ENCODE measurements at regions of chr7 and their contacts with region 1.

Region 1: DNA sequence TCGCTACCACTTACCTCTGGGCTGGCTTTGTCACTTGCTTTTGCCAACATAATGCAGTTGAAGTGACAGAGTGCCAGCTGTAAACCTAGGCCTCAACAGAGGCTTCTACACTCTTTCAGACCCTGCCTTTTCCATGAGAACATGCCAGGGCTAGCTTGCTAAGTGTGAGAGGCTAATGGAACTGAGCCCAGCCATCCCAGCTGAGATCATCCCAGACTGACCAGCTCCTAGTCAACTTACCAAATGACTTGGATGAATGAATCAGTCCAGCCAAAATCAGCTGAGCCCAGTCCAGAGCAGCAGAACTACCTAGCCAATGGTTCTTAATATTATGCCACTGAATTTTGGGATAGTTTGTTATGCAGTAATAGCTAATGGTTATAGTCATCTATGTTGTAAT is 34.7 kb upstream of the MKLN1 start:
- DNase-seq: peak; percentile 10
- H3K4me3 Mint-ChIP-seq: no peak overlapping the region
- H3K27ac Mint-ChIP-seq: no peak overlapping the region
- H3K4me1 Mint-ChIP-seq: peaks cover 16% of the 10 kb centered on the region
- H3K27me3 Mint-ChIP-seq: no peaks in the 10 kb centered on the region
- CTCF ChIP-seq: no peak

Region 2: GRCh38 chr7:130699686-130700085 is 593.3 kb before region 1 on chr7:
- CTCF ChIA-PET with region 1: no interaction called
- POLR2A ChIA-PET with region 1: no interaction called
- intact Hi-C with region 1: no loop called
- DNase-seq: peak; percentile 27
- H3K4me3 Mint-ChIP-seq: no peak overlapping the region
- H3K27ac Mint-ChIP-seq: no peak overlapping the region
- H3K4me1 Mint-ChIP-seq: no peaks in the 10 kb centered on the region
- H3K27me3 Mint-ChIP-seq: no peaks in the 10 kb centered on the region
- CTCF ChIP-seq: no peak

Region 3: DNA sequence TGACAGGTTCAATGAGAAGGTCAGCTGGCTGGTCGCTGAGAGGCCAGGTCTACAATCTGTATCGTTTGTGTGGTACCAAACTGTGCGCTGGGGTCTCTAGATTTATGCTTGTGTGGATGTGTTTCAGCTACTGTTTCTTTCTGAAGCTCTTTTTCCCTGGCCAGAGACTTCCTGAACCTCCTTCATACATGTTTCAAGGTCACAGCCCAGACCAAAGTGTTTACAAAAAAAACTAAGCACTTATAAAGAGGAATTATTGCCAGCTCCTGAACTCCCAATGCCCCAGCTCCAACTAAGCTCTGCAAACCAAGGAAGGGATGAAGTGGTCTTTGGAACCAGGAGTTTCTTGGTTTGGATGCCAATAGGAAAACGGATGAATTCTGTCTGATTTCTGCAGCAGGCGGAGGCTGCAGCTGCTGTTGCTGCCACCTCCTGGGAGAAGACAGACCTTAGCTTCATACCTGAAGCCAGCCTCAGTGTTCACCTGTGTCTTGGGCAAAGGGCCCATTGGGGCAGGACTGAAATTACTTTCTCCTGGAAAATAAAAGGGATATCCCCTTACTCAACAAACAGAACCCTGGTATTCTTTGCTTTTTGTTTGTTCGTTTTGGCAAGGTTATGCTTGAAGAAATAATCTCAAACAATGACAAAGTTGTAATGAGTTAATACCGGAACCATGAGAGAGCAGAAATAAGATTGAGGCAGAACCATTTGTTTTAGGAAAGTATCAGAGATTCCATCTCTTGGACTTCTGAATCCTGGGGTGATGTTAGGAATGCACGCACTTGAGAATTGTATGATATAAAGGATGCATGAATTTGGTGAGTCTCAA is 10.1 kb after region 1 on chr7:
- CTCF ChIA-PET with region 1: interaction called, 26 read pairs
- POLR2A ChIA-PET with region 1: no interaction called
- intact Hi-C with region 1: no loop called
- DNase-seq: peak; percentile 57
- H3K4me3 Mint-ChIP-seq: no peak overlapping the region
- H3K27ac Mint-ChIP-seq: no peak overlapping the region
- H3K4me1 Mint-ChIP-seq: peaks cover 12% of the 10 kb centered on the region
- H3K27me3 Mint-ChIP-seq: no peaks in the 10 kb centered on the region
- CTCF ChIP-seq: peak; percentile 81

Region 4: GRCh38 chr7:131808736-131809135 is 515.7 kb after region 1 on chr7:
- CTCF ChIA-PET with region 1: no interaction called
- POLR2A ChIA-PET with region 1: no interaction called
- intact Hi-C with region 1: no loop called
- DNase-seq: no peak
- H3K4me3 Mint-ChIP-seq: no peak overlapping the region
- H3K27ac Mint-ChIP-seq: no peak overlapping the region
- H3K4me1 Mint-ChIP-seq: no peaks in the 10 kb centered on the region
- H3K27me3 Mint-ChIP-seq: no peaks in the 10 kb centered on the region
- CTCF ChIP-seq: no peak

Measured in MCF 10A (cell line).